ENCODE measurements at regions of chr10 and their contacts with region 1.

Region 1: DNA sequence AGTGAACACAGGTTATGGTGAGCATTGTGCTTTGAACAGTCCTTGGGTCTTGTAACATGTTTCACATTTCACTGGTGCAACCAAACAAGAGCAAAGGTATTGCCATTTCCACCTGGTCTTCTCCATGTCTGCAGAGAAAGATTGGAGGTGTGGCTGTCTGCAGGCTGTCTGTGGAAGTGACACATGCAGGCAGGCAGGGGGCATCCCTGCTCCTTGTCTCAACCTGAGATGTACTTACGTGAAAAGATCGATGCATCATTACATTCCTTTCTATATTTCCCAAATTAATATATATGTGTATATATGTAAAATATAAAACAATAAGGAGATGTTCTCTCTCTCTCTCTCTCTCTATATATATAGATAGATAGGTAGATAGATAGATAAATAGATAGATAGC is 54.3 kb downstream of the LRRC18 start:
- DNase-seq: peak; percentile 70
- H3K4me3 ChIP-seq: no peak overlapping the region; a peak in 1 of 4 replicates
- H3K27ac ChIP-seq: no peak overlapping the region
- H3K4me1 ChIP-seq: no peaks in the 10 kb centered on the region; a peak in 1 of 4 replicates
- H3K27me3 ChIP-seq: no peaks in the 10 kb centered on the region
- CTCF ChIP-seq: no peak
- EP300 ChIP-seq: no peak
- RAD21 ChIP-seq: peak; percentile 82

Region 2: GRCh38 chr10:48896756-48897437 is 11.5 kb after region 1 on chr10:
- CTCF ChIA-PET with region 1: interaction called, 22 read pairs
- POLR2A ChIA-PET with region 1: no interaction called
- DNase-seq: no peak
- H3K4me3 ChIP-seq: no peak overlapping the region
- H3K27ac ChIP-seq: no peak overlapping the region
- H3K4me1 ChIP-seq: no peaks in the 10 kb centered on the region
- H3K27me3 ChIP-seq: no peaks in the 10 kb centered on the region
- CTCF ChIP-seq: no peak
- EP300 ChIP-seq: no peak
- RAD21 ChIP-seq: no peak

Region 3: GRCh38 chr10:48904861-48905260 is 19.5 kb after region 1 on chr10:
- CTCF ChIA-PET with region 1: interaction called, 15 read pairs
- POLR2A ChIA-PET with region 1: no interaction called
- DNase-seq: no peak
- H3K4me3 ChIP-seq: no peak overlapping the region
- H3K27ac ChIP-seq: no peak overlapping the region
- H3K4me1 ChIP-seq: no peaks in the 10 kb centered on the region
- H3K27me3 ChIP-seq: no peaks in the 10 kb centered on the region
- CTCF ChIP-seq: no peak
- EP300 ChIP-seq: no peak
- RAD21 ChIP-seq: no peak